Panc1 (cell line): ENCODE measurements at regions of chr3 and their contacts with region 1.

Region 1: GRCh38 chr3:154120961-154121700 is at the start of gene ARHGEF26:
- DNase-seq: no peak
- ATAC-seq: peak; percentile 94
- H3K4me3 ChIP-seq: peak within 1 kb of the TSS; percentile 55 to 70
- H3K27ac ChIP-seq: peak within 1 kb of the TSS; percentile 55; the same call in 1 of the 2 replicates
- H3K4me1 ChIP-seq: peaks cover 6% of the 10 kb centered on the region; the same call in 1 of the 2 replicates
- H3K27me3 ChIP-seq: peaks cover 24% of the 10 kb centered on the region
- CTCF ChIP-seq: no peak
- total RNA-seq, gene ARHGEF26: 2.0 TPM

Region 2: GRCh38 chr3:154095832-154096421 is 25.2 kb before region 1 on chr3:
- CTCF ChIA-PET with region 1: no interaction called
- POLR2A ChIA-PET with region 1: no interaction called
- in situ Hi-C with region 1: no loop called
- intact Hi-C with region 1: no loop called
- DNase-seq: no peak
- ATAC-seq: no peak
- H3K4me3 ChIP-seq: no peak overlapping the region
- H3K27ac ChIP-seq: no peak overlapping the region
- H3K4me1 ChIP-seq: no peaks in the 10 kb centered on the region
- H3K27me3 ChIP-seq: no peaks in the 10 kb centered on the region
- CTCF ChIP-seq: peak; percentile 64; the same call in 1 of the 2 replicates

Region 3: GRCh38 chr3:154243353-154243752 is 122.2 kb after region 1 on chr3:
- CTCF ChIA-PET with region 1: no interaction called
- POLR2A ChIA-PET with region 1: no interaction called
- in situ Hi-C with region 1: no loop called
- intact Hi-C with region 1: loop called (anchors 10 kb)
- DNase-seq: no peak
- ATAC-seq: no peak
- H3K4me3 ChIP-seq: no peak overlapping the region
- H3K27ac ChIP-seq: no peak overlapping the region
- H3K4me1 ChIP-seq: no peaks in the 10 kb centered on the region
- H3K27me3 ChIP-seq: no peaks in the 10 kb centered on the region
- CTCF ChIP-seq: no peak